Head of caudate nucleus (tissue), 42 donors: ENCODE measurements at regions of chr16 and their contacts with region 1.

Region 1: GRCh38 chr16:74774203-74775116 is at the start of gene FA2H:
- DNase-seq: peak; percentile 80 to 97 (median 93)

Region 2: GRCh38 chr16:73921295-73921694 is 853.2 kb before region 1 on chr16:
- intact Hi-C with region 1: no loop called
- DNase-seq: no peak

Region 3: DNA sequence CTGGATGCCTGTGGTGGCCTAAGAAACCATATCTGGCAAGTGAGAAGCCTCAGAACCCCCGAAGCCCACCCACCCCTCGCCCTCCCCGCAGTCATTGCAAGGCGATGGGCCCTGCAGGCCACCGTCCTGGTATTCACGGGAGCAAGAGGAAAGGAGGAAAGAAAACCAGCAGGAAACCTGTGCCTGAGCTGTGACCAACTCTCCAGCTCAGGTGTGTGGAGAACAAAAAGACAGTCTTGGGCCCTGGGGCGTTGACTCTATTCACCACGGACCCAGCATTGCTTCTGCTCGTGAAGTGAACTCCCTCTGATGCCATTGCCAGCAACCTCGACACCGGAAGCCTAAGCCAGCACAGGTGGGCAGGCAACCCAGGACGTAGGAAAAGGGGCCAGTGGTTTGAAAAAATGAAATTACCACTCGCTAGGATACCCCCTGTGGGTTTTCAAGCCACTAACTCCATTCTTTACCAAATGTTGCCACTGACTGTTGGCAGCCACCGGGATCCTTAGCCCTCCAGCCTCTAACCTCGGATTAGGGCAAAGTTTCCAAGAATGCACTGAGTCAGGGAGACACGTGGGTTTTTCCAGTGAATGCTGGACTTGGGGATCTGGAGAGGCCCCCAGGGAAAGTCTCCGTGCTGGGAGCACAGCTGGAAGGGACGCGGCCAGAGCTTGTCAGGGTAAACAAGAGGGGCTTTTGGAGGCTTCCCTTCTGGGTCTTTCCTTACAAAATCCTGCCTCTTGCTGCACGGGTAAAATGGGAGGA is 25.0 kb before region 1 on chr16:
- intact Hi-C with region 1: loop called (anchors 2 kb)
- DNase-seq: peak in 4 of 42 donors; percentile 28 to 43 (median 35)